GM12878 (cell line): ENCODE measurements at regions of chr2 and their contacts with region 1.

Region 1: DNA sequence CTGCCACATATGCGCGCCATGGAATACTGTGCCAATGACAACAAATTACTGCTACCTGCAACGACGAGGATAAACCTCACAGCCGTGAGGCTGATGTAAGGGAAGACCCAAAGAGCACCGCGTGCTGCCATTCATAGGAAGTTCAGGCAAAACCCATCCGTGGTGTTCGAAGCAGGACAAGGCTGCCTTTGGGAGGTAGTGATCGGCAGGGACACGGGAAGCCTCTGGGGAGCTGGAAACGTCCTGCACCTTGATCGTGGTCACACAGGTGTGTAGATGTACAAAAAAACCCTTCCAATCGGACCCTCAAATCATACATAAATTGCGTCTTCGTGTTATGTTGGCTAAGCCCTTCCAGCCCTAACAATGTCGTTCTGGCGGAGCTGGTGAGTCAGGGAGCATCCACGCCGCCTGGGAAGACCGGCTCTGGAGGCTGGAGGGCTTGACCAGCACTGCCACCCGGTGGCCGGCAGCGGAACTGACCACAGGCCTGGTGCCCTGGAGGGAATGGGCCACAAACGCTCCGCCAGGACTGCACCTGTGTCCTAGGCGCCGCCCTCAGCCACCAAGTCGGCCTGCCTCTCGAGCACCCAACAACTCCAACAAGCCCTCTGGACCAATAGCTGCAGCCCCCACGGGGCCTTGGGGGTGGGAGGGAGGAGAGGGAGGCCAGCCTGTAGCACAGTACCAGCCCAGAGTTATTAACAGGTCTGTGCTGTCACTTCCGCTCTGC is 4.1 kb upstream of the NEURL3 start:
- DNase-seq: peak; percentile 59
- ATAC-seq: peak; percentile 79
- H3K4me3 ChIP-seq: no peak overlapping the region
- H3K27ac ChIP-seq: no peak overlapping the region
- H3K4me1 ChIP-seq: peaks cover 18% of the 10 kb centered on the region
- H3K27me3 ChIP-seq: no peaks in the 10 kb centered on the region
- CTCF ChIP-seq: peak; percentile 93 to 99 (median 99); a peak in 5 of 6 replicates
- EP300 ChIP-seq: no peak
- POLR2A ChIP-seq: no peak
- RAD21 ChIP-seq: peak; percentile 95

Region 2: DNA sequence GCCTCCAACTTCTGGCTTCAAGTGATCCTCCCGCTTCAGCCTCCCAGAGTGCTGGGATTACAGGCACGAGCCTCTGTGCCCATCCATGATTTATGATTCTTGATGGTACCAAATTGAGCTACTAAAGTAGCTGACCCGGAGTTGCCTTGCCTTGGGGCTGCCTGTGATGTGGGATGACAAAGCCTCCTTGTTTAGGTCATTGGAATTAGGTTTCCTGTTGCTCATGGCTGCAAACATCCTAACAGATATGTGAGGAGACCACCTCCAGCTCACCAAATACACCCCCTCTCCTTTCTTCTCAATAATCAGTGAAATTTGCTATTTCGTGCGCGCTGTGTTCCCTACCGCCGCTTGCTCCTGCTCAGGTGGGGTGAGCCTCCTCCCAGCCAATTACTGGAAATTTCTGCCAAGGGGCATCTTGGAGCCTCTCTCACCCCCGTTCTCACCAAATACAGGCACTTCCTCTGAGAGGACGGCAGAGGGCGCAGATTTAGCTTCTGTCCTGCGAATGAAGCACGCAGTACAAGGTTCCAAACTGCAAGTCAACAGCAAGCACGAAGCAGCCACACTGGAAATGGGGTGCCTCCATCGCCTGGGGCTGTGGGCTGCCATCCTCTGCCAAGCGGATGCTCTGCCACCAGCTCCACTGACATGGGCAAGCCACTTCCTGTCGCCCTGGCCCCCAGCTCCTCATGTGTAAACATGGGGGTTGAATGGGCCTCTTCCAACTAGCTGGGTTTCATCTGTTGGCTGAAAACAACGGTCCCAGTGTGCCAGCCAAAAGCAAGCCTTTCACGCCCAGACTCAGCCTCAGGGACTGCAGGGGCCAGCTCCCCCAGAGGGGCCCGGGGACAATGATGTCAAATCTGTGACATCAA is 102.0 kb before region 1 on chr2:
- CTCF ChIA-PET with region 1: interaction called, 307 read pairs
- POLR2A ChIA-PET with region 1: interaction called, 3 read pairs
- RAD21 ChIA-PET with region 1: interaction called, 144 read pairs
- SMC1A ChIA-PET with region 1: interaction called, 123 read pairs
- in situ Hi-C with region 1: loop called (anchors 5 kb)
- intact Hi-C with region 1: loop called (anchors 1 kb)
- DNase-seq: peak; percentile 26
- ATAC-seq: peak; percentile 95
- H3K4me3 ChIP-seq: no peak overlapping the region
- H3K27ac ChIP-seq: no peak overlapping the region
- H3K4me1 ChIP-seq: peaks cover 6% of the 10 kb centered on the region
- H3K27me3 ChIP-seq: no peaks in the 10 kb centered on the region
- CTCF ChIP-seq: peak; percentile 86 to 90 (median 87)
- EP300 ChIP-seq: no peak
- POLR2A ChIP-seq: no peak
- RAD21 ChIP-seq: peak; percentile 84

Region 3: GRCh38 chr2:96470636-96471035 is 38.6 kb before region 1 on chr2:
- CTCF ChIA-PET with region 1: interaction called, 21 read pairs
- POLR2A ChIA-PET with region 1: interaction called, 4 read pairs
- RAD21 ChIA-PET with region 1: interaction called, 11 read pairs
- SMC1A ChIA-PET with region 1: interaction called, 8 read pairs
- in situ Hi-C with region 1: loop called (anchors 5 kb)
- intact Hi-C with region 1: loop called (anchors 1 kb)
- DNase-seq: no peak
- ATAC-seq: peak; percentile 100
- H3K4me3 ChIP-seq: no peak overlapping the region
- H3K27ac ChIP-seq: no peak overlapping the region
- H3K4me1 ChIP-seq: no peaks in the 10 kb centered on the region
- H3K27me3 ChIP-seq: no peaks in the 10 kb centered on the region
- CTCF ChIP-seq: peak; percentile 73 to 85 (median 74)
- EP300 ChIP-seq: no peak
- POLR2A ChIP-seq: no peak
- RAD21 ChIP-seq: peak; percentile 59

Region 4: GRCh38 chr2:96485751-96486651 is 23.3 kb before region 1 on chr2:
- CTCF ChIA-PET with region 1: interaction called, 31 read pairs
- POLR2A ChIA-PET with region 1: interaction called, 7 read pairs
- RAD21 ChIA-PET with region 1: interaction called, 5 read pairs
- SMC1A ChIA-PET with region 1: interaction called, 10 read pairs
- in situ Hi-C with region 1: no loop called
- intact Hi-C with region 1: loop called (anchors 1 kb)
- DNase-seq: peak; percentile 97
- ATAC-seq: peak; percentile 92
- H3K4me3 ChIP-seq: peak overlapping the region; percentile 84
- H3K27ac ChIP-seq: peak overlapping the region; percentile 95
- H3K4me1 ChIP-seq: peaks cover 23% of the 10 kb centered on the region
- H3K27me3 ChIP-seq: no peaks in the 10 kb centered on the region
- CTCF ChIP-seq: no peak
- EP300 ChIP-seq: peak; percentile 53 to 91; a peak in 2 of 4 replicates
- POLR2A ChIP-seq: peak; percentile 97
- RAD21 ChIP-seq: no peak

Region 5: DNA sequence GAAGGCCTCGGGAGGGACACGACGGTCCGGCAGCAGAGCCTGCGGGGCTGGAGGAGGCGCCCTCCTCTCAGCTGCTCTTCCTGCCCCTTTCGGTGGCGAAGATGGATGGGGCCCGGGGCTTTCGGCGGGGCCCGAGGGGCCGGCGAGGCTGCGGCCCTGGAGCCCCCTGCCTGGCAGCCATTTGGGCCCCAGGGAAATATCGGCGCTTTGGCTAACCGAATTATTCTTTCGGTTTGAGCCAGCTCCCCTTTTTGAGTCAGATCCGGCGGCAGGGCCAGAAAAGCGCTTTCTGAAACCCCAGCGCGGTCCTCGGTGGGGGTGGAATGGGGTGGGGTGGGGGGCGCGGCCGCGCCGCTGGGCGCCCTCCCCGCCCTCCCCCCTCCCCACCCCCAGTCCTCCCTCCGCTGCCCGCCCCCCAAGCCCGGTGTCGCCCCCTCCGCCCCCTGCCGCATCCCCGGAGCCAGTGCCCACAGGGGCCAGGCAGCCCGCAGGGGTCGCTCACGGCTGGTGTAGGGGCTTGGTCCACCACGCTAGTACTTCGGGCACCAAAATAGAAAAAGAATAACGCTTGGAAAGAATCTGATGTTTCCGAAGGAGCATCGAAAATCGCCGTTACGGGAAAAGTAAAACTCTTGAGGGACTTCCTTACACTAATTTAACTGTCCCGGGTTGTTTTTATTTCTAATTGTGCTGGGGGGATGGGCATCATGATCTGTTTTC is 18.2 kb after region 1 on chr2:
- CTCF ChIA-PET with region 1: interaction called, 51 read pairs
- POLR2A ChIA-PET with region 1: interaction called, 15 read pairs
- RAD21 ChIA-PET with region 1: interaction called, 60 read pairs
- SMC1A ChIA-PET with region 1: interaction called, 34 read pairs
- in situ Hi-C with region 1: no loop called
- intact Hi-C with region 1: no loop called
- DNase-seq: no peak
- ATAC-seq: peak; percentile 67
- H3K4me3 ChIP-seq: peak overlapping the region; percentile 39
- H3K27ac ChIP-seq: peak overlapping the region; percentile 97
- H3K4me1 ChIP-seq: peaks cover 88% of the 10 kb centered on the region
- H3K27me3 ChIP-seq: no peaks in the 10 kb centered on the region
- CTCF ChIP-seq: peak in 2 of 3 experiments; percentile 28 to 32; a peak in 3 of 6 replicates
- EP300 ChIP-seq: peak; percentile 65 to 70; a peak in 3 of 4 replicates
- POLR2A ChIP-seq: peak; percentile 73
- RAD21 ChIP-seq: peak; percentile 34; the same call in 1 of the 2 replicates

Region 6: GRCh38 chr2:96554293-96555145 is 45.2 kb after region 1 on chr2:
- CTCF ChIA-PET with region 1: interaction called, 63 read pairs
- POLR2A ChIA-PET with region 1: interaction called, 5 read pairs
- RAD21 ChIA-PET with region 1: interaction called, 56 read pairs
- SMC1A ChIA-PET with region 1: interaction called, 21 read pairs
- in situ Hi-C with region 1: no loop called
- intact Hi-C with region 1: loop called (anchors 1 kb)
- DNase-seq: no peak
- ATAC-seq: peak; percentile 79
- H3K4me3 ChIP-seq: no peak overlapping the region
- H3K27ac ChIP-seq: no peak overlapping the region
- H3K4me1 ChIP-seq: no peaks in the 10 kb centered on the region
- H3K27me3 ChIP-seq: no peaks in the 10 kb centered on the region
- CTCF ChIP-seq: peak; percentile 88 to 95 (median 91); a peak in 5 of 6 replicates
- EP300 ChIP-seq: no peak
- POLR2A ChIP-seq: peak; percentile 64
- RAD21 ChIP-seq: peak; percentile 77

Region 7: GRCh38 chr2:97774425-97774824 is 1265.1 kb after region 1 on chr2:
- CTCF ChIA-PET with region 1: no interaction called
- POLR2A ChIA-PET with region 1: no interaction called
- RAD21 ChIA-PET with region 1: no interaction called
- SMC1A ChIA-PET with region 1: no interaction called
- in situ Hi-C with region 1: no loop called
- intact Hi-C with region 1: no loop called
- DNase-seq: no peak
- ATAC-seq: 0 out of 3 replicates have a peak, but pooled peaks have one; percentile 37
- H3K4me3 ChIP-seq: no peak overlapping the region
- H3K27ac ChIP-seq: no peak overlapping the region
- H3K4me1 ChIP-seq: no peaks in the 10 kb centered on the region
- H3K27me3 ChIP-seq: no peaks in the 10 kb centered on the region
- CTCF ChIP-seq: peak; percentile 18 to 31 (median 24); a peak in 3 of 6 replicates
- EP300 ChIP-seq: no peak
- POLR2A ChIP-seq: no peak
- RAD21 ChIP-seq: no peak